ENCODE measurements at regions of chr1 and their contacts with region 1.

Region 1: DNA sequence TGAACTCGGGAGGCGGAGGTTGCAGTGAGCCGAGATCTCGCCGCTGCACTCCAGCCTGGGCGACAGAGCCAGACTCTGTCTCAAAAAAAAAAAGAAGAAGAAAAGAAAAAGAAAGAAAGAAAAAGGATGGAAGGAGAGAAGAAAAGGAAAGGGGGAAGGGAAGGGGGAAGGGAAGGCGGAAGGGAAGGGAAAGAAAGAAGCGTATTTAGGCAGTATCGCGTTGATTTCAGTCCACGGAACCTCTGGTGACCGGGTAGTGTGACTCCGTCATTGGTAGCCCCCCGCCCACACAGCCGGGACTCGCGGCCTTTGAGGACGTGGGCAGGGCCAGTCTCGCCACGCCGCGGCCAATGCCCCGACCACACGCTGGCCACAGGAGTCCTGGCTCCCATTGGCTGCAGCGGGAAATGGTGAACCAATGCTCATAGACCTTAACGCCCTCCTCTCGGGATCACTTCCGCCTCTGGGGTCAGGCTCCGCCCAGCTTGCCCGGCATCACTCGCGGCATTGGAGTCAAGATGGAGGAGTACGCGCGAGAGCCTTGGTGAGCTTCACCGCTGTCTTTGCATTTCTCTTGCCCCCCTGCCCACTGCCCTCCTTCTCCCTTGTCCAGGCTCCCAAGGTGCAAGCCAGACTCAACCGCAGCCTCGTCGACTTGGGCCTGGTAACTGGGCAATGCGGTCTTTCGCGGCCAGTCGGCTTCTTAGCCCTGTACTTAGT is at the start of gene TIMM17A:
- DNase-seq: peak; percentile 96 to 98
- H3K4me3 ChIP-seq: peak within 1 kb of the TSS; percentile 84 to 96 (median 92)
- H3K27ac ChIP-seq: peak within 1 kb of the TSS; percentile 89 to 94
- H3K4me1 ChIP-seq: peaks cover 0 to 6% of the 10 kb centered on the region in 2 donors
- H3K27me3 ChIP-seq: no peaks in the 10 kb centered on the region
- CTCF ChIP-seq: no peak
- POLR2A ChIP-seq: peak; percentile 76
- total RNA-seq, gene TIMM17A: 24.5 to 30.1 (median 26.2) TPM

Region 2: GRCh38 chr1:201019321-201019977 is 935.7 kb before region 1 on chr1:
- intact Hi-C with region 1: loop called (anchors 10 kb)
- DNase-seq: peak in 1 of 2 donors; percentile 40
- H3K4me3 ChIP-seq: no peak overlapping the region
- H3K27ac ChIP-seq: no peak overlapping the region
- H3K4me1 ChIP-seq: no peaks in the 10 kb centered on the region
- H3K27me3 ChIP-seq: peaks cover 0 to 4% of the 10 kb centered on the region in 2 donors
- CTCF ChIP-seq: no peak
- POLR2A ChIP-seq: no peak

Measured in breast epithelium (tissue), 4 donors.